Activated CD4-positive, alpha-beta T cell treated with anti-CD3 and anti-CD28 coated beads for 36 hours (primary cell): ENCODE measurements at regions of chr4 and their contacts with region 1.

Region 1: GRCh38 chr4:47836641-47837093 is 1.2 kb downstream of the CORIN start:
- DNase-seq: peak; percentile 78
- ATAC-seq: peak; percentile 73
- H3K4me3 Mint-ChIP-seq: peak overlapping the region; percentile 71
- H3K27ac Mint-ChIP-seq: no peak overlapping the region
- H3K4me1 Mint-ChIP-seq: peaks cover 26% of the 10 kb centered on the region
- H3K27me3 Mint-ChIP-seq: peaks cover 5% of the 10 kb centered on the region

Region 2: DNA sequence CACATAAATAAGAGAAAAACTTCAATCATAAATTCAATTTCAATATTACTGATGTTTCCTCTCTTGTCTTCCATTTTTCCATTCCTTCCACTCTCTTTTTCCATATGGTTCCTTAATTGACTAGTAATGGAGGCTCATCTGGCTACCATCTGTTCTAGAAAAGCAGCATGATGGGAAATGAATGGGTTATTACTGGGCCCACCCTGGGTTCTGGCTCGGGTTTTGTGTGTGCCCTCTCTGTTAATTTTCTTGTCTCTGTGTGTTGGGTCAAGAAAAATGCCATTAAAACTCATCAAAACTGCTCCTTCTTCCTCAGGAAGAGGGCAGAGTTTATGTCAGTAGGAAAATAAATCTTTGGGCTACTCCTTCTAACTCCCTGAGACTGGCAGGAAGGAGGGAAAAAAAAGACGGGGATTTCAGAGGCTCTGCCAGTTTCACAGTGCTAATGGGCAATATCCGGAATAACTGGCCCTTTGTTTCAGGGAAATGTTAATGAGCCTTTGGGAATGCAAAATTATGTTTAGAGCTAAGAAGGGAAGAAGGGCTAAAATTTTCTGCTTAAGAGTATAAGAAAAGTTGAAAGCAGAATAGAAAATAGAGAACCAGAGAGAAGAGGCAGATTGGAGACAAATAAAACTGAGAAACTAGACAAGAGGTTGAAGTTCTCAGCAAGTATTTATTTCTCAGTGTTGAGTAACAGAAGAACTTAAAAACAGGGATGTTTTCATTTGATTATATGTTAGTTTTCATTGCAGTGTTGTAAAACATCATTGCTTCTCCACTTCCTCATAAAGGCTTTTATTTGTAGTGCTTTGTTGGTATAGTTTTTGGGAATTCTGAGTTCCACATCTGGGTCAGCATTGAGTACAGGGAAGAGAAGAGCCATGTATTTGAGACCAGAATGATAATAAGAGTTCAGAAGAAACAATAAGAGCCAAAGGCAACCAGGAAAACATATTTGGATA is 785.6 kb before region 1 on chr4:
- CTCF ChIA-PET with region 1: no interaction called
- POLR2A ChIA-PET with region 1: no interaction called
- intact Hi-C with region 1: no loop called
- DNase-seq: no peak
- ATAC-seq: no peak
- H3K4me3 Mint-ChIP-seq: no peak overlapping the region
- H3K27ac Mint-ChIP-seq: no peak overlapping the region
- H3K4me1 Mint-ChIP-seq: no peaks in the 10 kb centered on the region
- H3K27me3 Mint-ChIP-seq: peaks cover 23% of the 10 kb centered on the region

Region 3: DNA sequence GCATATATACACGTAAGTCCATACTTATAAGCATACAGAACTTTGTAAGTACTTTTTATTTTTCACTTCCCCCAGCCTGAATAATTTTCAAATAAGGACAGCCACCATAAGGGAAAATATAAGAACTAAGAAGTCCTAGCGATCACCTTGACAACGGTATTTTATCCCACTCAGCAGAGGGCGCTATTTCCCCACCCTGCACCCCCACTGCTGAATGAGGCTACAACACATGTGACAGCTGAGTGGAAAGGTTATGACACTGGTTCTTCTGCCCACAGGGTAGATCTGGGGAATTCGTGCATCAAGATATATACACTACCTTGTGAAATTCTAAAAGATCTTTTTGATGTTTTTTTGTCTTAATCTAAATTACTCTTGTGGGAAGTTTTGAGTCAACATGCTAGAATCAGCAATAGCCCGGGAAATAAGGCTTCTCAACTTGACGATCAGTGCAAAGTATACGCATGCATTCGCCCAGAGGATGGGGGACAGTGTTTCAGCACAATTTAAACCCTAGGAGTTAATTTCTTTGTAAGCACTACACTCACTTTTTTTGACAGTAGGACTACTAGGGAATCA is 150.3 kb before region 1 on chr4:
- CTCF ChIA-PET with region 1: interaction called, 20 read pairs
- POLR2A ChIA-PET with region 1: no interaction called
- intact Hi-C with region 1: loop called (anchors 1 kb)
- DNase-seq: peak; percentile 84
- ATAC-seq: peak; percentile 97
- H3K4me3 Mint-ChIP-seq: no peak overlapping the region
- H3K27ac Mint-ChIP-seq: no peak overlapping the region
- H3K4me1 Mint-ChIP-seq: peaks cover 2% of the 10 kb centered on the region
- H3K27me3 Mint-ChIP-seq: peaks cover 7% of the 10 kb centered on the region

Region 4: DNA sequence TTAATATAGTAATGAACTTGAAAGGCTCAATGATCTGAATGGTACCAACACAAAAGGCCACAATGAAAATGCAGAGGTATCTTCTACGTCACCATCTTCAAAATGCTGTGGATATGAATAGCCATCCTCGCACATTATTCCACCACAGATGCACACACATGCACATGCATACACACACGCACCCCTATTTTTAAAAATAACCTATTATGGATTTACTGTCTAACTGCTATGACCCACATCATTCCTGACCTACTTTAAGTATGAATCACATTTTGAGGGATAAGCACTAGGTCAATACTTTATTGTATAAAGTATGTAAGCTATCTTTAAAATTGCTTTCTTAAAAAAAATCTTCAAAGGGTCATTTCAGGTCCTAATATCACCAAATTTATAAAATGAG is 25.6 kb after region 1 on chr4:
- CTCF ChIA-PET with region 1: no interaction called
- POLR2A ChIA-PET with region 1: no interaction called
- intact Hi-C with region 1: no loop called
- DNase-seq: no peak
- ATAC-seq: no peak
- H3K4me3 Mint-ChIP-seq: no peak overlapping the region
- H3K27ac Mint-ChIP-seq: no peak overlapping the region
- H3K4me1 Mint-ChIP-seq: no peaks in the 10 kb centered on the region
- H3K27me3 Mint-ChIP-seq: no peaks in the 10 kb centered on the region

Region 5: DNA sequence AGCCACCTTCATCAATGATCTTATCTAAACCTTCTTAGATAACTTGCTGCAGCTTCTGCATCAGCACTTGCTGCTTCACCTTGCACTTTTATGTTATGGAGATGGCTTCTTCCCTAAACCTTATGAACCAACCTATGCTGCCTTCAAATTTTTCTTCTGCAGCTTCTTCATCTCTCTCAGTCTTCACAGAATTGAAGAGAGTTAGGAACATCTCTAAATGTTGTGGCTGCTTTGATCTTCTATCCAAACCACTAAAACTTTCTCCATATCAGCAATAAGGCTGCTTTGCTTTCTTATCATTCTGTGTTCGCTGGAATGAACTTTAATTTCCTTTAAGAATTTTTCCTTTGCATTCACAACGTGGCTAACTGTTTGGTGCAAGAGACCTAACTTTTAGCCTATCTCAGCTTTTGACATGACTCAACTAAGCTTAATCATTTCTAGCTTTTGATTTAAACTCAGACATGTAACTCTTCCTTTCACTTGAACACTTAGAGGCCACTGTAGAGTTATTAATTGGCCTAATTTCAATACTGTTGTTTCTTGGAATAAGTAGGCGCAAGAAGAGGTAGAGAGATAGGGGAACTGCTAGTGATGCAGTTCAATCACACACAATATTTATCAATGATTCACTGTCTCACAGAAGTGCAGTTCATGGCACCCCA is 37.3 kb after region 1 on chr4:
- CTCF ChIA-PET with region 1: interaction called, 3 read pairs
- POLR2A ChIA-PET with region 1: no interaction called
- intact Hi-C with region 1: loop called in 1 of 2 experiments (anchors 2 kb)
- DNase-seq: no peak
- ATAC-seq: peak; percentile 96
- H3K4me3 Mint-ChIP-seq: no peak overlapping the region
- H3K27ac Mint-ChIP-seq: peak overlapping the region; percentile 72
- H3K4me1 Mint-ChIP-seq: peaks cover 19% of the 10 kb centered on the region
- H3K27me3 Mint-ChIP-seq: no peaks in the 10 kb centered on the region

Region 6: DNA sequence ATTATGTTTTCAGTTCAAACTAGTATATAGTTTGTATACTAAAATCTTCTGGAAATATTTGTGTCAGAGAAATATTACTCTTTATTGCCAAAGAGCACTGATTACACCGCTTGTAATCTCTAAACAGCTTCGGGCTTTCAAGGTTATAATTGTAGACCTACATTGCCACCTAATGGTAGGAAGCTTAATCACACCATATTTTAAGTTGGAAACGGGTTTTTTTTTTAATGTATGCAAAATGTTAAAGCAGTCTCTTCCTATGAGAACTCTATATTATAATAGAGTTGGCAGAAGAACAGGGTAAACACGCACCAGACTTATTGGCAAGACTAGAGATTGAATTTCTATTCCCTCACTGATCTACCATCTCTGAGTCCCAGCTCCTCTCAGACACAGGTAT is 97.2 kb after region 1 on chr4:
- CTCF ChIA-PET with region 1: interaction called, 7 read pairs
- POLR2A ChIA-PET with region 1: no interaction called
- intact Hi-C with region 1: loop called in 1 of 2 experiments (anchors 5 kb)
- DNase-seq: no peak
- ATAC-seq: peak; percentile 49
- H3K4me3 Mint-ChIP-seq: no peak overlapping the region
- H3K27ac Mint-ChIP-seq: no peak overlapping the region
- H3K4me1 Mint-ChIP-seq: no peaks in the 10 kb centered on the region
- H3K27me3 Mint-ChIP-seq: peaks cover 1% of the 10 kb centered on the region

Region 7: DNA sequence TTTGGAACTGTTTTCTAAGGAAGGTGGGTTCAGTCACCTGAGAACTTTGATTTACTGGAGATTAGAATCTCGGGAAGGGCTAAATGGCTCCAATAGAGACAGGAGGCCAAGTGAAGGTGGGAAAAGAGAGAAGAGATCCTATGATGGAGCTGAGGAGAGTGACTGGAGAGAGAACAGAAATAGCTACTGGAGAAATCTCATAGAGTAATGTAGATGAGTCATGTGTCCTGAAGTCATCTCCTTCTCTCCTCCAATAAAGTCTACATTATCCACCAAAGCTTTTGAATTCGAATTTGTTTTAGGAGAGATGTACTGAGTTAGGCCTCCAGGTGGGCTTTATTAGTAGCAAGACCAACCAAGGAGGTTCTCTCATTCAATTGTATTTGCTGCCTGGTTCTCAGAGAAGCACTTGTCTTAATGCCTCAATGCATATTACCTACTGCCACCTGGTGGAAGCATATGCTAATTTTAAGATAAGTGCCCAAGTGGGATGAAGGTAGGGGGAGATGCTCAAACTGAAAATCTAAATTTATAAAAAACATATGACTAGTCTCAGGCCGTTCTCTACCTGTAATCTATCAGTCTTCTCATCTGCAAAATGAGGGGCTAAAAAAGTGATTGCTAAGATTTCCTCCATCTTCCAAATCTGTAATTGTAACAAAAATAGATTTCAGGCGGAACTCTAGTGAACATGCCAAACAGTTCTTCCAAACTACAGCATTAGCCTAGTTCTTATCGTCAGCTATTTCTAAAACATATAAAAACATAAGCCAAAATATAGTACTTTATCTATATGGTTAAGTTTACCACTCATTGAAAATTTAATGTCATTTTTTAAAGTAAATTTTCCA is 273.0 kb after region 1 on chr4:
- CTCF ChIA-PET with region 1: interaction called, 3 read pairs
- POLR2A ChIA-PET with region 1: no interaction called
- intact Hi-C with region 1: loop called in 1 of 2 experiments (anchors 10 kb)
- DNase-seq: no peak
- ATAC-seq: peak; percentile 86
- H3K4me3 Mint-ChIP-seq: no peak overlapping the region
- H3K27ac Mint-ChIP-seq: peak overlapping the region; percentile 65
- H3K4me1 Mint-ChIP-seq: peaks cover 61% of the 10 kb centered on the region
- H3K27me3 Mint-ChIP-seq: no peaks in the 10 kb centered on the region